GM23248 (cell line): ENCODE measurements at regions of chr3 and their contacts with region 1.

Region 1: DNA sequence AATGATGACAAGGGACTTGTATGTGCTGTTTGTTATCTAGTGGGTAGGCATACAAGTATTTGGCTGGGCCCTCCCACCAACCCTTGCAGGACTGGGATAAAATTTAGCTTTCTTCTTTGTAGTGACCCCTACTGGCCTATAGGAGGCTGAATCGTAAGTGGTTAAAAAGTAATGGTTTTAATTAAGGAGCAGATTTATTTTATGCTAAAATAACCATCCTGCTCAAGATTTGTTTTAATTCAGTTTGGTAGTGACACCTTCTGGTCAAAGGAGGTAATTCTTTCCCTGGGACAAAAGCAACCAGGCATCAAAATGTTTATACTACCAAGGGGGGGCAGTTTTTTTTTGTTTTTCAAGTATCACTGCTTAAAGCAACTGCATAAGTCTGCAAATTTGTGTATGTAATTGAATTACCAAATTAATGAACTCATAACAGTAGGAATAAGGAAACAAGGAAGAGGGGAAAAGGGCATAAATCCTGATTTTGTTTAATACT is 70.7 kb downstream of the TOP2B start:
- DNase-seq: peak; percentile 80
- H3K4me3 ChIP-seq: no peak overlapping the region
- H3K27ac ChIP-seq: no peak overlapping the region
- H3K4me1 ChIP-seq: peaks cover 18% of the 10 kb centered on the region
- H3K27me3 ChIP-seq: no peaks in the 10 kb centered on the region

Region 2: DNA sequence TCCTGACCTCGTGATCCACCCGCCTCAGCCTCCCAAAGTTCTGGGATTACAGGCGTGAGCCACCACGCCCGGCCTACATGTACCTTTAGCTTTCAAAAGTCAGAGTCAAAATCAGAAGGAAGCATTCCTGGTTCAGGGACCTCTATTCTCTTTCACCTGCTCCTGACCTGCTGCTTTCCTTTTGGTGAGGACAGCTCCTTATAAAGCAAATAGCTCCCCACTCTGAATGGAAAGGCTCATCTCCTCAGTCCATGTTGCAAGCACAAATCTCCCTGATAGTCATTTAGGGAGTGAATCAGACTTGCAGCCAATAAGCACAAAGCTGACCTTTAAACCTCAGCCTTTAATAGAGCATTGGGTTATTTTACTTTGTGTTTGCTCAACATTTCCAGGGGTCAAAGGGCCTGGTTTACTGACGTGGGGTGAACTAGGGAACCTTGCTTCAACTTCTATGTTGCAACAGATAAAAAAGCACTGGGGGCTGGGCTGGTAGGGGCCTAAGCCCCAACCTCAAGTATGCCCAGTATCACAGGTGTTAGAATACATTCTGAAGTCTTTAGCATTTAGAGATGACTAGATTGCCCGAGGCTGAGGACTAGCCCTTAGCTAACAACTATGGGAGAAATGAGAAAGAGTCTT is 1142.5 kb before region 1 on chr3:
- in situ Hi-C with region 1: loop called (anchors 25 kb)
- DNase-seq: no peak
- H3K4me3 ChIP-seq: no peak overlapping the region
- H3K27ac ChIP-seq: no peak overlapping the region
- H3K4me1 ChIP-seq: no peaks in the 10 kb centered on the region
- H3K27me3 ChIP-seq: no peaks in the 10 kb centered on the region

Region 3: GRCh38 chr3:24494618-24495325 is 1099.3 kb before region 1 on chr3 and contains the start of gene THRB:
- in situ Hi-C with region 1: no loop called
- DNase-seq: peak; percentile 83
- H3K4me3 ChIP-seq: peak within 1 kb of the TSS; percentile 77
- H3K27ac ChIP-seq: peak within 1 kb of the TSS; percentile 37
- H3K4me1 ChIP-seq: peaks cover 24% of the 10 kb centered on the region
- H3K27me3 ChIP-seq: no peaks in the 10 kb centered on the region
- total RNA-seq, gene THRB: 2.9 and 5.1 TPM in 2 replicates

Region 4: GRCh38 chr3:24793896-24794295 is 800.2 kb before region 1 on chr3:
- in situ Hi-C with region 1: loop called (anchors 25 kb)
- DNase-seq: no peak
- H3K4me3 ChIP-seq: no peak overlapping the region
- H3K27ac ChIP-seq: no peak overlapping the region
- H3K4me1 ChIP-seq: no peaks in the 10 kb centered on the region
- H3K27me3 ChIP-seq: no peaks in the 10 kb centered on the region

Region 5: GRCh38 chr3:24963762-24964625 is 630.1 kb before region 1 on chr3:
- in situ Hi-C with region 1: loop called (anchors 25 kb)
- DNase-seq: peak; percentile 50
- H3K4me3 ChIP-seq: no peak overlapping the region
- H3K27ac ChIP-seq: no peak overlapping the region
- H3K4me1 ChIP-seq: no peaks in the 10 kb centered on the region
- H3K27me3 ChIP-seq: no peaks in the 10 kb centered on the region